CD4-positive, alpha-beta T cell (primary cell): ENCODE measurements at regions of chr9 and their contacts with region 1.

Region 1: GRCh38 chr9:100700689-100701318 is 122.9 kb downstream of the CAVIN4 start:
- DNase-seq: no peak
- ATAC-seq: no peak
- H3K4me3 ChIP-seq: no peak overlapping the region
- H3K4me3 Mint-ChIP-seq: no peak overlapping the region
- H3K27ac ChIP-seq: no peak overlapping the region
- H3K27ac Mint-ChIP-seq: no peak overlapping the region
- H3K4me1 ChIP-seq: no peaks in the 10 kb centered on the region
- H3K4me1 Mint-ChIP-seq: no peaks in the 10 kb centered on the region
- H3K27me3 ChIP-seq: no peaks in the 10 kb centered on the region
- H3K27me3 Mint-ChIP-seq: no peaks in the 10 kb centered on the region
- CTCF ChIP-seq: no peak

Region 2: GRCh38 chr9:100739681-100740080 is 38.9 kb after region 1 on chr9:
- CTCF ChIA-PET with region 1: no interaction called
- POLR2A ChIA-PET with region 1: no interaction called
- intact Hi-C with region 1: no loop called
- DNase-seq: no peak
- ATAC-seq: no peak
- H3K4me3 ChIP-seq: no peak overlapping the region
- H3K4me3 Mint-ChIP-seq: no peak overlapping the region
- H3K27ac ChIP-seq: no peak overlapping the region
- H3K27ac Mint-ChIP-seq: no peak overlapping the region
- H3K4me1 ChIP-seq: no peaks in the 10 kb centered on the region
- H3K4me1 Mint-ChIP-seq: no peaks in the 10 kb centered on the region
- H3K27me3 ChIP-seq: no peaks in the 10 kb centered on the region
- H3K27me3 Mint-ChIP-seq: no peaks in the 10 kb centered on the region
- CTCF ChIP-seq: no peak

Region 3: DNA sequence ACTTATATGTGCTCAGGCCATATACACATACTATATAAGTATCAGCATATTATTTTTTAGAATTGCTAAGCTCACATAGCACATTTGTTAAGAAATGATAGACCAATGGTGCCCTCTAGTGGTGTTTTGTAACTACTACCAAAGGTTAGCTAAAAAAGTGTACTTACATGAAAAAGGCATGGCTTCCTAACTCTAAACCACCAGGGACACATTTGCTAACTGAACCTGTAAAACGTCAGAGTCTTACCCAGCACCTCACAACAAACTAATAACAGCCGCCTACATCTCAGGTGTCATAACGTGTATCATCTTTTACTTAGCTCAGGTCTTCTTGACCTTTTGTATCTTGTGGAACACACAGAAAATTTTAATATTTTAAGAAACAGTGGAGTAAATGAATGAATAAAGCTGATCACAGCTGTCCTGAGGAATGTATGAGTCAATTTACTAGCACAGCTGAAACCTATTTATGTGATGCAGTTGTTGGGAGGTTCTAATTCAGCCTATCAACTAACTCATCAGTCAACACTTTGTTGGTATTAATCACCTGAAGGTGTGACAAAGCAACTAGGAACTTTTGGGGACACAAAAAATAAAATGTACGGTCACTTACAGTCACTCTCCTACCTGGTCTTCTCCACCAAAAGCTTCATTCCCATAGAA is 611.1 kb after region 1 on chr9:
- CTCF ChIA-PET with region 1: no interaction called
- POLR2A ChIA-PET with region 1: no interaction called
- intact Hi-C with region 1: loop called in 1 of 2 experiments (anchors 5 kb)
- DNase-seq: peak in 3 of 14 experiments; percentile 64 to 77 (median 76)
- ATAC-seq: peak; percentile 51
- H3K4me3 ChIP-seq: no peak overlapping the region
- H3K4me3 Mint-ChIP-seq: no peak overlapping the region
- H3K27ac ChIP-seq: no peak overlapping the region
- H3K27ac Mint-ChIP-seq: no peak overlapping the region
- H3K4me1 ChIP-seq: no peaks in the 10 kb centered on the region
- H3K4me1 Mint-ChIP-seq: no peaks in the 10 kb centered on the region
- H3K27me3 ChIP-seq: peaks cover 0 to 10% of the 10 kb centered on the region in 2 experiments
- H3K27me3 Mint-ChIP-seq: peaks cover 11% of the 10 kb centered on the region
- CTCF ChIP-seq: peak; percentile 81